ENCODE measurements at regions of chr19 and their contacts with region 1.

Region 1: GRCh38 chr19:7522072-7522922 is at the start of gene MCOLN1:
- DNase-seq: peak; percentile 100
- ATAC-seq: peak; percentile 96
- H3K4me3 Mint-ChIP-seq: peak within 1 kb of the TSS; percentile 61
- H3K27ac Mint-ChIP-seq: peak within 1 kb of the TSS; percentile 76
- H3K4me1 Mint-ChIP-seq: peaks cover 11% of the 10 kb centered on the region
- H3K27me3 Mint-ChIP-seq: no peaks in the 10 kb centered on the region
- total RNA-seq, gene MCOLN1: 6.7 to 7.7 TPM

Region 2: DNA sequence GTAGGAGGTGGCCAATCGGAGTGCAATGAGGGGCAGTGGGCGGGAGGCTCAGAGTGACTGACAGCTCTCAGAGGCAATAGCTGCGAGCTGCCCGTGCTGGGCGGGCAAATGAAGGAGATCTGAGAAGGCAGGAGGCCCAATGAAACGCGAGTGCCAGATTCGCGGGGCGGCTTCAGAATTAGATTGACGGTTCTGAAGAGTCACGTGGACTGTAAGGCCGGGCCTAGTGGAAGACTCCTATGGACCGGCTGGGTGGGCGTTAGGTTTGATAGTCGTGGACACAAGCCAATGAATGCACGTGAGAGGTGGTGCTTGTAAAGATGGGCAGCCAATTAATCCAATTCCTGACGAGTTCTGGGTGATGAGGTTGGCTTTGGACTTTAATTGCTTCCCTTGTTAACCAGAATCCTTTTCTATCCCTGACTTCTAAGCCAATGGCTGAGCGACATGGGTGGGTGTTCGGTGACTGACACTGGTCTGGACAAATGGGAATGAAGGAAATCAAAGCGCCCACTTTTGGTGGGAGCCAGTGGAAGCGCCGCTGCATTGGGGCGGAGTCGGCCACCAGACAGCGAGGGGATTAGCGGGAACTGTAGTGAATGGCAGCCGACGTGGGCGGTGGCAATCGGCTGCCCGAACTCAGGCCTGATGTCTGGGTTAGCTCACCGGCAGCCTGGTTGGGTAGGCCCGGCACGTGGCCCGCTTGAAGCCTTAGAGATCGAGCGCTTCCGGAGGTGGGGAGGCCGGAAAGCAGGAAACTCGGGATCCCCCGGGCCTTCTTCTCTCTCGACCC is 1097.2 kb before region 1 on chr19:
- CTCF ChIA-PET with region 1: no interaction called
- POLR2A ChIA-PET with region 1: no interaction called
- intact Hi-C with region 1: loop called in 1 of 2 experiments (anchors 1 kb)
- DNase-seq: peak; percentile 100
- ATAC-seq: peak; percentile 88
- H3K4me3 Mint-ChIP-seq: peak overlapping the region; percentile 73
- H3K27ac Mint-ChIP-seq: peak overlapping the region; percentile 98
- H3K4me1 Mint-ChIP-seq: peaks cover 31% of the 10 kb centered on the region
- H3K27me3 Mint-ChIP-seq: no peaks in the 10 kb centered on the region

Region 3: GRCh38 chr19:7394731-7395359 is 127.5 kb before region 1 on chr19:
- CTCF ChIA-PET with region 1: interaction called, 3 read pairs
- POLR2A ChIA-PET with region 1: no interaction called
- intact Hi-C with region 1: loop called in 1 of 2 experiments (anchors 1 kb)
- DNase-seq: peak; percentile 94
- ATAC-seq: peak; percentile 86
- H3K4me3 Mint-ChIP-seq: peak overlapping the region; percentile 83
- H3K27ac Mint-ChIP-seq: peak overlapping the region; percentile 78
- H3K4me1 Mint-ChIP-seq: peaks cover 36% of the 10 kb centered on the region
- H3K27me3 Mint-ChIP-seq: no peaks in the 10 kb centered on the region

Region 4: GRCh38 chr19:7488736-7489353 is 33.5 kb before region 1 on chr19 and contains the start of gene PEX11G:
- CTCF ChIA-PET with region 1: no interaction called
- POLR2A ChIA-PET with region 1: no interaction called
- intact Hi-C with region 1: loop called in 1 of 2 experiments (anchors 1 kb)
- DNase-seq: peak; percentile 95
- ATAC-seq: peak; percentile 88
- H3K4me3 Mint-ChIP-seq: peak within 1 kb of the TSS; percentile 73
- H3K27ac Mint-ChIP-seq: peak within 1 kb of the TSS; percentile 76
- H3K4me1 Mint-ChIP-seq: peaks cover 20% of the 10 kb centered on the region
- H3K27me3 Mint-ChIP-seq: no peaks in the 10 kb centered on the region
- total RNA-seq, gene PEX11G: 0.51 to 1.1 TPM

Region 5: GRCh38 chr19:7506385-7507328 is 15.6 kb before region 1 on chr19:
- CTCF ChIA-PET with region 1: no interaction called
- POLR2A ChIA-PET with region 1: interaction called, 3 read pairs
- intact Hi-C with region 1: loop called in 1 of 2 experiments (anchors 1 kb)
- DNase-seq: peak; percentile 81
- ATAC-seq: peak; percentile 85
- H3K4me3 Mint-ChIP-seq: no peak overlapping the region
- H3K27ac Mint-ChIP-seq: no peak overlapping the region
- H3K4me1 Mint-ChIP-seq: peaks cover 13% of the 10 kb centered on the region
- H3K27me3 Mint-ChIP-seq: peaks cover 28% of the 10 kb centered on the region

Region 6: GRCh38 chr19:7550987-7551761 is 28.9 kb after region 1 on chr19:
- CTCF ChIA-PET with region 1: no interaction called
- POLR2A ChIA-PET with region 1: no interaction called
- intact Hi-C with region 1: loop called in 1 of 2 experiments (anchors 1 kb)
- DNase-seq: peak; percentile 77
- ATAC-seq: peak; percentile 87
- H3K4me3 Mint-ChIP-seq: no peak overlapping the region
- H3K27ac Mint-ChIP-seq: peak overlapping the region; percentile 58
- H3K4me1 Mint-ChIP-seq: peaks cover 11% of the 10 kb centered on the region
- H3K27me3 Mint-ChIP-seq: no peaks in the 10 kb centered on the region

Region 7: DNA sequence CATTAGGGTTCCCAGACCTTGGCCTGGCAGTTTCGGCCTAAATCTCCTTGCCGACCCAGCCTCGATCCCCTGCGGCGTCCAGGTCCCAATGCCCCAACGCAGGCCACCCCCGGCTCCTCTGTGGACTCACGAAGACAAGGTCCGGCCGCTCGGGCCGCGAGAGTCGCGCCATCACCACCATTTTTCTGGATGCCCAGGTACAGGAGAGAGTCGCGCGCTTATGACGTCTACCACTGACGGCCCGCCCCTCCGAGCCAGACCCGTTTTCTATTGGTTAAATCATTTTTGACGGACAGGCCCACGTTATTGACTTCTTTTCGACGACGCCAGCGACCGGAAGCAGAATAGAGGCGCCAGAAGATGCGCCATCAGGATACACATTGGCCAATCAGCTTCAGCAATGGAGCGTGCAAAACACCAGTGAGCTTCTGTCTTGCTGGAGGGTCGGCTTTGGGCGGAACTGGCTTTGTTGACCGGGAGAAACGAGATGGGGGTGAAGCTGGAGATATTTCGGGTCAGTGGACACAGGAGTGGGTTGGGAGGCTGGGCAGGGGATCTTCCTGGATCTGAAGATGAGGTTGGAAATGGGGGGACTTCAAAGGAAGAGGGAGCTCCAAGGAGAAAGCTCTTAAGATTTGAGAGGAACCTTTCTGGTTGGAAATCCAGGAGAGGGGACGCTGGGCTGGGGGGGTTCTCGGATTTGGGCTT is 107.2 kb after region 1 on chr19 and contains the starts of genes PET100 and XAB2:
- CTCF ChIA-PET with region 1: no interaction called
- POLR2A ChIA-PET with region 1: no interaction called
- intact Hi-C with region 1: loop called in 1 of 2 experiments (anchors 1 kb)
- DNase-seq: peak; percentile 97
- ATAC-seq: peak; percentile 99
- H3K4me3 Mint-ChIP-seq: peak within 1 kb of the TSS; percentile 88
- H3K27ac Mint-ChIP-seq: peak within 1 kb of the TSS; percentile 97
- H3K4me1 Mint-ChIP-seq: peaks cover 32% of the 10 kb centered on the region
- H3K27me3 Mint-ChIP-seq: no peaks in the 10 kb centered on the region
- total RNA-seq, gene PET100: 45.1 to 99.4 TPM
- total RNA-seq, gene XAB2: 45.9 to 48.3 TPM

Region 8: GRCh38 chr19:7799640-7800355 is 277.5 kb after region 1 on chr19:
- CTCF ChIA-PET with region 1: no interaction called
- POLR2A ChIA-PET with region 1: no interaction called
- intact Hi-C with region 1: no loop called
- DNase-seq: peak; percentile 73
- ATAC-seq: peak; percentile 63
- H3K4me3 Mint-ChIP-seq: peak overlapping the region; percentile 21
- H3K27ac Mint-ChIP-seq: no peak overlapping the region
- H3K4me1 Mint-ChIP-seq: peaks cover 8% of the 10 kb centered on the region
- H3K27me3 Mint-ChIP-seq: peaks cover 32% of the 10 kb centered on the region